ENCODE measurements at regions of chr9 and their contacts with region 1.

Region 1: DNA sequence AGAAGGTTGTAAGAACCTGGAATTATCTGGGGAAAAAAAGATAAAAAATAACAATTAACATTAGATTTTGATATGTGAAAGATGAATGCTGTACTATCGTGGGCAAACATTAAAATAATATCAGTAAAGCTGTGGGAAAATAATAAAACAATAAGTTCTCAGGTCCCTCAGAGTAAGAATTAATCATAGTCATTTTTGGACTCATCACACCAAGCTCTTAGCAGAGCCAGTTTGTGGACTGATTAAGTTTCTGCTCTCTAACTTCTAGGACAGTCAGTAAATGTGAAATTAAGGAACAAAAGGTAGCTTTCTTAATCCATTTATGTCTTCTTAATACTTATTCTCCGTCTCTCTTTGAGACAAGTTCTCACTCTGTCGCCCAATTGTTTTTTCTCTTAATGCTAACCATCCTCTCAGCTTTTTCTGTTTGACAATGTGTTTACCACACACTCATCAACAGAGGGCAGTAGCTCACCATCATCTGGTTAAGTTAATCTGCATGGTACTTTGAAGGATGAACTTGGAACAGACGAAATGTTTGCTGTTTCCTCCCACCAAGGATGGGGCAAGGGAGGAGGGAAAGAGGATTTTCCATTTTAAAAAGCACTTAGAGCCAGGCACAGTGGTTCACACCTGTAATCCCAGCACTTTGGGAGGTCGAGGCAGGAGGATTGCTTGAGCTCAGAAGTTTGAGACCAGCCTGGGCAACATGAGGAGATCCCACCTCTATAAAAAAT is 5.3 kb upstream of the ACO1 start:
- DNase-seq: peak; percentile 66
- H3K4me3 ChIP-seq: no peak overlapping the region
- H3K27ac ChIP-seq: no peak overlapping the region
- H3K27me3 ChIP-seq: no peaks in the 10 kb centered on the region
- CTCF ChIP-seq: peak; percentile 77

Region 2: GRCh38 chr9:32472344-32472743 is 93.2 kb after region 1 on chr9:
- in situ Hi-C with region 1: no loop called
- DNase-seq: no peak
- H3K4me3 ChIP-seq: no peak overlapping the region
- H3K27ac ChIP-seq: no peak overlapping the region
- H3K27me3 ChIP-seq: no peaks in the 10 kb centered on the region
- CTCF ChIP-seq: no peak

Region 3: GRCh38 chr9:32533336-32533735 is 154.2 kb after region 1 on chr9:
- in situ Hi-C with region 1: no loop called
- DNase-seq: no peak
- H3K4me3 ChIP-seq: no peak overlapping the region
- H3K27ac ChIP-seq: no peak overlapping the region
- H3K27me3 ChIP-seq: no peaks in the 10 kb centered on the region
- CTCF ChIP-seq: no peak

Region 4: DNA sequence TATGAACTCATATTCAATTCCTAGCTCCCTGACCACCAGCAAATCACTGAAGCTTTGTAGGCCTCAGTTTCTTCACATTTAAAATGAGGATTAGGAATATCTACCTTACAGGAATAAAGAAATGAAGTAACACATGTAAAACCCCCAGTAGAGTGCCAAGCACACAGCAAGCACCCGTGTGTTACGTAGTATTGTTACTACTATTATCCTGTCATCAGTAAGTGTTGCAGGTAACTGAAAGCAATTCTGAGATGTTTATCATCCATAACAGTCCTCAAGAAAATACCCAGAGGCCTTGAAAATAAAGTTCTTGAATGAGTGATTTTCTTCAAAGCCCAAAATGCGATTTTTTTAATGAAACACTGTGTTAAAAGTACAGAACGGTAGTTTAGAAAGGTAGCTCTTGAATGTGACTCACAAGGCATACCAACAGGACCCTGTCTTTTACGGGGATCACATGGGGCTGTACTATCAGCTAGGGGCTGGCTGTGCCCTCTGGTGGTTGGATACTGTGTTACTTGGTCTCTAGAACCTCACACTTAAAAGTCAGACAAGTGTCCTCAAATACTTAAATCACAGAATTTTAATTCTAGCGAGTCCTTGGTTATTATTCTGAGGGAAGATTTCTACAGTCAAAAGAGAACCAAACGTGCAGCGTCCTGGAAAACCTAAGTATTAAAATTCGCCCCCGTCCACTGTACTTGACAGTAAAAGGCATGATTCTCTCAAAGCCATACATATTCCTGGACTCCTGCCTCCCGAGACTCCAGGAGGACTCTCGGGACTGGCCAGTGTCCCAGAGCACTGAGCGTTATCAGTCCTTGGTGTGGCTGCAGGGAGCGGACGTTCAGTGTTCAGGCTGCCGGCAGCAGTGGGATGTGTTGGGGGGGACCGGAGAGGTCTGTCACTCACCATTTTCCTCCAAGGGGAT is 193.1 kb after region 1 on chr9:
- in situ Hi-C with region 1: loop called (anchors 10 kb)
- DNase-seq: peak; percentile 83
- H3K4me3 ChIP-seq: peak overlapping the region; percentile 95
- H3K27ac ChIP-seq: peak overlapping the region; percentile 41
- H3K27me3 ChIP-seq: no peaks in the 10 kb centered on the region
- CTCF ChIP-seq: peak; percentile 85